ENCODE measurements at regions of chrX and their contacts with region 1.

Region 1: GRCh38 chrX:154373340-154374306 is 811 bp downstream of the FLNA start:
- DNase-seq: peak in 1 of 2 donors; percentile 54
- ATAC-seq: peak; percentile 34 to 42
- H3K4me3 ChIP-seq: peak overlapping the region; percentile 36 to 51 (median 42)
- H3K27ac ChIP-seq: peak overlapping the region; percentile 49 to 75 (median 64)
- H3K4me1 ChIP-seq: peaks cover 4 to 9% of the 10 kb centered on the region in 2 donors
- H3K27me3 ChIP-seq: no peaks in the 10 kb centered on the region
- CTCF ChIP-seq: peak; percentile 42 to 70 (median 66)
- POLR2A ChIP-seq: no peak

Region 2: GRCh38 chrX:153003981-153004380 is 1369.6 kb before region 1 on chrX:
- in situ Hi-C with region 1: no loop called
- intact Hi-C with region 1: no loop called
- DNase-seq: no peak
- ATAC-seq: no peak
- H3K4me3 ChIP-seq: no peak overlapping the region
- H3K27ac ChIP-seq: no peak overlapping the region
- H3K4me1 ChIP-seq: no peaks in the 10 kb centered on the region
- H3K27me3 ChIP-seq: peaks cover 0 to 4% (median 0%) of the 10 kb centered on the region in 3 donors
- CTCF ChIP-seq: no peak
- POLR2A ChIP-seq: no peak

Region 3: DNA sequence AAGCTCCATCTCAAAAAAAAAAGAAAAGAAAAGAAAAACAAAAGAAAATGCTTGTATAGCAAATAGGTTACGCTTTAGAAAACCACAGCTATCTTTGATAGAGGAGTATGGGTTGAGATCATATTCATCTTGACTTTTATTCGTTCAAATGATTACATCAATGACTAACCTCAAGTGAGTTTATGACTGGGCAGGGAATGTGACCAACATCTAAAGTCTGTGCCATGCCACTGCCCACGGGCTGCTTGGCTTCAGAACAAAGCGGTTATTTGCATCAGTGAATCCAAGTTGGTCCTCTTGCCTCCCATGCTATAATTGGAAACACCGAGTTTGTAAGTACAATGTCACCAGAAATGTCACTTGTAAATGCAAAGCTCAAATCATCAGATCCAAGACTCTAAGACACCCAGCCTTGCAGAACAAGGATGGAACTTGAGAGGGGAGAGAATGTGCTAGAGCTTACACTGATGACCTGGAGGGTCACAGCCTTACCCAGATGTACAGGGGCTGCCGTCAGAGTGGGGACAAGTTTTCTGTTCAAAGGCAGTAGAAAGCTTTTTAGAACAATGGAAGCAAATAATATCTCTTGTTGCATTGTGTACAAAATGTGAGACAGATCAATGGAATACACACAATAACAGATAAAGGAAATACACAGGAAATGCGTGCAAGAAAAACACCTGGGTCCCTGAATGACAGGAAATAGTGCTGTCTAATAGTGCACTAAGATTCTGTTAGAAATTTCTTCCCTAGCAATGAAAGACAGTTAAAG is 238.0 kb before region 1 on chrX:
- in situ Hi-C with region 1: no loop called
- intact Hi-C with region 1: no loop called
- DNase-seq: no peak
- ATAC-seq: no peak
- H3K4me3 ChIP-seq: no peak overlapping the region
- H3K27ac ChIP-seq: no peak overlapping the region
- H3K4me1 ChIP-seq: peaks cover 0 to 7% of the 10 kb centered on the region in 2 donors
- H3K27me3 ChIP-seq: no peaks in the 10 kb centered on the region
- CTCF ChIP-seq: no peak
- POLR2A ChIP-seq: no peak

Region 4: GRCh38 chrX:154321594-154321993 is 52.0 kb before region 1 on chrX:
- in situ Hi-C with region 1: no loop called
- intact Hi-C with region 1: loop called (anchors 1 kb)
- DNase-seq: no peak
- ATAC-seq: peak in 1 of 2 donors; percentile 54
- H3K4me3 ChIP-seq: no peak overlapping the region
- H3K27ac ChIP-seq: no peak overlapping the region
- H3K4me1 ChIP-seq: no peaks in the 10 kb centered on the region
- H3K27me3 ChIP-seq: peaks cover 0 to 4% (median 0%) of the 10 kb centered on the region in 3 donors
- CTCF ChIP-seq: peak in 1 of 5 experiments; percentile 29
- POLR2A ChIP-seq: no peak

Region 5: DNA sequence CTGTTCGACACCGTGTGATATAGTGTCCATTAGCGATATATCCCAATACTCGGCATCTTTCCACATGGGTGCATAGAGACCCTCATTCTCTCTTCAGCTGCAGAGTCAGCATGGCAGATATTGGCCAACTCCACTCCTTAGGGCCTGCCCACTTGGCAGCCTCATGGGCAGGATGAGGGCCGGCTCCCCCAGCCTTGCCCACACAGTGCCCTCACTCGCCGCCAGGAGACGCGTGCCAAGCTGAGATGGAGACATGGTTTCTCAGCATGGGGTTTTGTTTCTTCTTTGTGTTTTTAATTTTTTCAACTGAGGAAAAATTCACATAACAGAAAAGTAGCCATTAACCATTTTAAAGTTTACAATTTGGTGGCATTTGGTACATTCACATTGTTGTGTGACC is 79.2 kb after region 1 on chrX:
- in situ Hi-C with region 1: no loop called
- intact Hi-C with region 1: no loop called
- DNase-seq: no peak
- ATAC-seq: no peak
- H3K4me3 ChIP-seq: no peak overlapping the region
- H3K27ac ChIP-seq: no peak overlapping the region
- H3K4me1 ChIP-seq: no peaks in the 10 kb centered on the region
- H3K27me3 ChIP-seq: no peaks in the 10 kb centered on the region
- CTCF ChIP-seq: no peak
- POLR2A ChIP-seq: no peak